ENCODE measurements at regions of chr6 and their contacts with region 1.

Region 1: GRCh38 chr6:96897383-96898240 is at the start of gene NDUFAF4:
- DNase-seq: peak; percentile 96
- H3K4me3 Mint-ChIP-seq: peak within 1 kb of the TSS; percentile 70
- H3K27ac Mint-ChIP-seq: peak within 1 kb of the TSS; percentile 90
- H3K4me1 Mint-ChIP-seq: peaks cover 11% of the 10 kb centered on the region
- H3K27me3 Mint-ChIP-seq: no peaks in the 10 kb centered on the region
- CTCF ChIP-seq: peak; percentile 84
- total RNA-seq, gene NDUFAF4: 39.6 and 50.9 TPM in 2 replicates

Region 2: DNA sequence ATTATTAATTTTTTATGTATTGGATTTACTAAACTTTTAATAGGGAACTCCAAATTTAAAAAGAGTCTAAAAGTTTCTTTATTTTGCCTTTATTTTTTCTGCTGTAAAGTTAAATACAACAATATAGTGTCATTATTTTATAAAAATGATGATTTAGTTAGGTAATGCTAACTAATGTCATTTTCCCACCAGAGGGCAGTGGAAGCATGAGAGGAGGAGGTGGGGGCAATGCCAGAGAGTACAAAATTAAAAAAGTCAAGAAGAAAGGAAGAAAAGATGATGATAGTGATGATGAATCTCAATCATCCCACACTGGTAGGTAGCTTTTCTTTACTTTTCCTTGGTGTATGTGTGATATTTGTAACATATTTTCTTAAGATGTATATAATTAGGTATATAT is 354.9 kb before region 1 on chr6:
- CTCF ChIA-PET with region 1: no interaction called
- intact Hi-C with region 1: loop called (anchors 10 kb)
- DNase-seq: no peak
- H3K4me3 Mint-ChIP-seq: no peak overlapping the region
- H3K27ac Mint-ChIP-seq: no peak overlapping the region
- H3K4me1 Mint-ChIP-seq: no peaks in the 10 kb centered on the region
- H3K27me3 Mint-ChIP-seq: no peaks in the 10 kb centered on the region
- CTCF ChIP-seq: peak; percentile 19

Region 3: GRCh38 chr6:96743496-96743895 is 154.1 kb before region 1 on chr6:
- CTCF ChIA-PET with region 1: no interaction called
- intact Hi-C with region 1: no loop called
- DNase-seq: no peak
- H3K4me3 Mint-ChIP-seq: no peak overlapping the region
- H3K27ac Mint-ChIP-seq: no peak overlapping the region
- H3K4me1 Mint-ChIP-seq: no peaks in the 10 kb centered on the region
- H3K27me3 Mint-ChIP-seq: no peaks in the 10 kb centered on the region
- CTCF ChIP-seq: no peak

Region 4: GRCh38 chr6:96923871-96924493 is 26.4 kb after region 1 on chr6:
- CTCF ChIA-PET with region 1: interaction called, 7 read pairs
- intact Hi-C with region 1: loop called (anchors 2 kb)
- DNase-seq: no peak
- H3K4me3 Mint-ChIP-seq: peak overlapping the region; percentile 99
- H3K27ac Mint-ChIP-seq: peak overlapping the region; percentile 76
- H3K4me1 Mint-ChIP-seq: peaks cover 8% of the 10 kb centered on the region
- H3K27me3 Mint-ChIP-seq: peaks cover 15% of the 10 kb centered on the region
- CTCF ChIP-seq: no peak

Region 5: DNA sequence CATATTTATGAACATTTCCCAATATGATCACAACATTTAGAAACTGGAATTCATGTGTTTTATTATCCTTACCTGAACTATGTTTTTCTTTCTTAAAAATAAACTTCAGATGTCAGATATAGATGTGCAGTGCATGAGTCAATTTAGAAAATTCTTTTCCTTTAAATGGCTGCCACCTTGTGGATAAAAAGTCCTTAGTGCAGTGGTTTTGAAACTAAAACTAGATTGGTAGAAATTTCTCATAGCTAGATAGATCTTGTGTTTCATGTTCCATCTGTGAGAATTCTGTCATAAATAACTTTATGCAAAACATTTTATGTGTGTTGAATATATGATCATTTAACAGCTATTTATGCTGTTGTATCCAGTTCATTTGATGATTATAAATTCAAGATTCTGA is 161.9 kb after region 1 on chr6:
- CTCF ChIA-PET with region 1: interaction called, 15 read pairs
- intact Hi-C with region 1: loop called (anchors 1 kb)
- DNase-seq: no peak
- H3K4me3 Mint-ChIP-seq: no peak overlapping the region
- H3K27ac Mint-ChIP-seq: no peak overlapping the region
- H3K4me1 Mint-ChIP-seq: no peaks in the 10 kb centered on the region
- H3K27me3 Mint-ChIP-seq: peaks cover 51% of the 10 kb centered on the region
- CTCF ChIP-seq: no peak

Measured in Calu3 (cell line).